ENCODE measurements at regions of chr6 and their contacts with region 1.

Region 1: DNA sequence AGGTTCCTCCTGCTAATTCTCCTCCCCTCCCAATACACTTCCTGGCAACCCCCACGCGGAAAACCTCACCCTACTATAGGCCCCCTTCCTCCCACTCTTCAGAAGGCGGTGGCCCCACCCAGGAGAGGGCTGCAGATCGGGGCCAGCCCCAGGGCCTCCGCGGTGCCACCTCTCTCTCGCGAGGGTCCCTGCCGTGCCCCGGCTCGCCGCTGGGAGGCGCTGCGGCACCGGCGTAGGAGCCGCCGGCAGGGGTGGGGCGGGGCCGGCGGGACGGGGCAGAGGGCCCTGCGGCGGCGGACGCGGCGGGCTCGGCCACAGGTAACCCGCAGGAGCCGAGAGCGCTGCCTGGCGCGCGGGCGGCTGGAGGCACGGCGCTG is at the start of gene ANKRD6:
- DNase-seq: no peak
- H3K4me3 ChIP-seq: peak within 1 kb of the TSS; percentile 62 to 65 (median 63)
- H3K27ac ChIP-seq: no peak within 1 kb of the TSS
- H3K4me1 ChIP-seq: peaks cover 5% of the 10 kb centered on the region
- H3K27me3 ChIP-seq: peaks cover 14% of the 10 kb centered on the region
- CTCF ChIP-seq: peak; percentile 61 to 94 (median 73)
- polyA plus RNA-seq, gene ANKRD6: 5.7 to 9.4 TPM (median 5.8 TPM) in 3 replicates

Region 2: GRCh38 chr6:89098461-89098860 is 334.4 kb before region 1 on chr6:
- dilution Hi-C with region 1: no loop called
- DNase-seq: no peak
- H3K4me3 ChIP-seq: no peak overlapping the region
- H3K27ac ChIP-seq: no peak overlapping the region
- H3K4me1 ChIP-seq: no peaks in the 10 kb centered on the region
- H3K27me3 ChIP-seq: no peaks in the 10 kb centered on the region
- CTCF ChIP-seq: no peak

Region 3: GRCh38 chr6:89623749-89624148 is 190.9 kb after region 1 on chr6:
- dilution Hi-C with region 1: loop called (anchors 10 kb)
- DNase-seq: no peak
- H3K4me3 ChIP-seq: no peak overlapping the region
- H3K27ac ChIP-seq: no peak overlapping the region
- H3K4me1 ChIP-seq: no peaks in the 10 kb centered on the region
- H3K27me3 ChIP-seq: no peaks in the 10 kb centered on the region
- CTCF ChIP-seq: no peak

Region 4: GRCh38 chr6:89873721-89874120 is 440.9 kb after region 1 on chr6:
- dilution Hi-C with region 1: no loop called
- DNase-seq: no peak
- H3K4me3 ChIP-seq: no peak overlapping the region
- H3K27ac ChIP-seq: no peak overlapping the region
- H3K4me1 ChIP-seq: no peaks in the 10 kb centered on the region
- H3K27me3 ChIP-seq: no peaks in the 10 kb centered on the region
- CTCF ChIP-seq: no peak